Mammary epithelial cell (primary cell): ENCODE measurements at regions of chr11 and their contacts with region 1.

Region 1: GRCh38 chr11:68903288-68904247 is at the starts of genes IGHMBP2 and MRPL21:
- DNase-seq: peak; percentile 83
- H3K4me3 ChIP-seq: peak within 1 kb of the TSS; percentile 68 to 97 (median 71)
- H3K27ac ChIP-seq: peak within 1 kb of the TSS; percentile 70
- H3K4me1 ChIP-seq: peaks cover 20% of the 10 kb centered on the region
- H3K27me3 ChIP-seq: no peaks in the 10 kb centered on the region
- CTCF ChIP-seq: no peak
- total RNA-seq, gene IGHMBP2: 8.2 to 19.6 TPM
- total RNA-seq, gene MRPL21: 30.2 to 66.3 TPM

Region 2: DNA sequence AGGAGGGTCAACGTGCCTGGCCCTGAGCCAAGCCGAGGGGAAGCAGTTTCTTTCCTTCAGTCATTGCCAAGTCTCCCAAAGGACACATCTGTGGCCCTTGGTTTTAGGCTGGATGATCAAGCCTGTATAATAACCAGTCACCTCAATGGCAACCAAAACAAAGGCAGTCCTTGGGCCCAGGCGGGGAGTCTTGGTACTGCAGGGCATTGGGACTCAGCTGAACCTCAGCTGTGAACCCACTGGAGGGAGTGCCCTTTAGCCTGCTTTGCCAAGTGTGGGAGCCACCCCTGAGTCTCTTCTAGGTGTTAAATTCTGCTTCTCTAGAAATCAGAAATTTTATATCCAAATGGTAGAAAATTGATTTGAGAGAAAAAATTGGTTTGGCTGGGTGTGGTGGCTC is 98.8 kb before region 1 on chr11:
- CTCF ChIA-PET with region 1: no interaction called
- dilution Hi-C with region 1: loop called (anchors 5 kb)
- in situ Hi-C with region 1: no loop called
- intact Hi-C with region 1: no loop called
- DNase-seq: no peak
- H3K4me3 ChIP-seq: no peak overlapping the region
- H3K27ac ChIP-seq: no peak overlapping the region
- H3K4me1 ChIP-seq: no peaks in the 10 kb centered on the region
- H3K27me3 ChIP-seq: no peaks in the 10 kb centered on the region
- CTCF ChIP-seq: no peak

Region 3: DNA sequence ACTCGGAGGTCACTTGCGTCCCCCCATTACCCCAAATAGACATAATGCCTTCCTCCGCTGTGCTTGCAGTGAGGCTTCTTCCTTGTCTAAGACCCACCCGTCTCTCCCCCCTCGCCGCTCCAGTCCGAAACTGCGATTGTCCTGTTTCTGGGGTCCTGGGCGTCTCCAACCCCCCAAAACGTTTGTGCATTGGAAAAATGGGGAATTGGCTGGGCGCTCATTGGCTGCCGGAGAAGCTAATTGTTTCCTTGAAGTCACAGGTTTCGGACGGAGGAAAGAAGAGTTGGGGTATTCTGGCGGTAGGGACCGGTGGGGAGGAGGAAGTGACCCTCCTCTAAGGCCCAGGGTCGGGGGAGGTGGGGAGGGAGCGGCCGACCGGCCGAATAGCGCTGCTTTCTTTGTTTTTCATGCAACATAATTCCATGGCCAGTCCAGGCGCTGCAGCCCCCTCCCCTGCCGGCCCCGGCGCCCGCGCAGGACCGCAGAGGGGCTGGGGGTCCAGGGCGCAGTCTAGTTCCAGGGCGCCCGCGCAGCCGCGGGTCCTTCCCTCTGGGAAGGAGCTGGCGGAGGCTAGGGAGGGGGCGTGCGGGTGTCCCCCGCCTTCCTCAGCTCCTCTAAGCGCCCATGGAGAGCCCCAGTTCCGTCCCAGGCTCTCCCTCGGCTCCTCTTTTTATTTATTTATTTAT is 49.2 kb before region 1 on chr11:
- CTCF ChIA-PET with region 1: no interaction called
- dilution Hi-C with region 1: loop called (anchors 5 kb)
- in situ Hi-C with region 1: no loop called
- intact Hi-C with region 1: no loop called
- DNase-seq: no peak
- H3K4me3 ChIP-seq: no peak overlapping the region
- H3K27ac ChIP-seq: no peak overlapping the region
- H3K4me1 ChIP-seq: peaks cover 5% of the 10 kb centered on the region
- H3K27me3 ChIP-seq: peaks cover 17% of the 10 kb centered on the region
- CTCF ChIP-seq: no peak

Region 4: DNA sequence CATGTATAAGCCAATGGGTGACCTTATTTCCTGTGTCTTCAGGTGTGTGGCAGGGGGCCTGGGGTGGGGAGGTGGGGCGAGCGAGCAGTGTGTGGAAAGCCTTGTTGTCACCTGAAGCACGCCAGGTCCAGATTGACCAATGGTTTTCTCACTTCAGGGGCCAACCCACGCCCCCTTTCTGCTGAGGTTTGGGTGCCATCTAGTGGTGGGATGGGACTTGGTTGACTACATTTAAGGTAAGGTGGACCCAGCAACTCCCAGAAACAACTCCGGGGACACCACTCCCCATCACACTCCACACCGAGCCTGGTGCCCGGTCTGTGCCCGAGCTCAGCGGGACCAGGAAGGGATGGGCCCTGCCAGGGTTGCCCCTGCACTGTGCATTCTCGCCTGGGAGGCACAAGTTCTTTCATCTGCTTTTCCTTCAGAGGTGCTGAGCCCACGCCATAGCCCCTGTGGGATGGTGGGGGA is 185.1 kb after region 1 on chr11:
- CTCF ChIA-PET with region 1: no interaction called
- dilution Hi-C with region 1: no loop called
- in situ Hi-C with region 1: no loop called
- intact Hi-C with region 1: loop called (anchors 1 kb)
- DNase-seq: peak; percentile 70
- H3K4me3 ChIP-seq: no peak overlapping the region
- H3K27ac ChIP-seq: no peak overlapping the region
- H3K4me1 ChIP-seq: peaks cover 7% of the 10 kb centered on the region
- H3K27me3 ChIP-seq: no peaks in the 10 kb centered on the region
- CTCF ChIP-seq: peak; percentile 74 to 81